MCF 10A (cell line): ENCODE measurements at regions of chr2 and their contacts with region 1.

Region 1: DNA sequence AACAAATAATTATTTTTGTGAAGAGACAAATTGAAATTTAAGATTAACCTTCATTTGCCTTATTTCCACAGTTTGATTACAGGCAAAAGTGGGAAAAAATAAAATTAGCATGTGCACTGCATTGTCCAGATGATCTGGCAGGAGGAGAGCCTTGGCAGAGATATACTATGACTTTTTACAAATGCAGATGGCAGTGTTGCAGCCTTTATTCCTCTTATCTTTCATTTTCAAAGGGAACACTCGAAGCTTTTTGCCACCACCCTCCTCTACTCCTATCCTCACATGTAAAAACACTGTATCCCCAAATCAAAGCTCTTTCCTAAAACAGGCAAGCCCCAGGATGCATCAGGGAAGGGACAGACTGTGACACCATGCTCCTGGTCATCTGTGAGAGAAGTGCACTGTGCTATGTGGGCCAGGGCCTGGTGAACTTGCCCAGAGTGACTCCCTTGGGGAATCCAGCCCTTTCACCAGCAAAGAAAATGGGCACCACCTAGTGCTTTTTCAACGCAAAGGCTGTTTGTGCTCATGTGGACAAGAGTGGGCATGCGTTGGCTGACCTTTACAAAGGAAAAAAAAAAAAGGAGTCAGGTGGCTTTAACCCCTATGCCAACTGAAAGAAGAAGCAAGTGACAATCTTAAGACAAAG is 74.7 kb upstream of the ETAA1 start:
- DNase-seq: peak; percentile 76
- H3K4me3 Mint-ChIP-seq: no peak overlapping the region
- H3K27ac Mint-ChIP-seq: peak overlapping the region; percentile 57
- H3K4me1 Mint-ChIP-seq: peaks cover 6% of the 10 kb centered on the region
- H3K27me3 Mint-ChIP-seq: no peaks in the 10 kb centered on the region
- CTCF ChIP-seq: peak; percentile 44

Region 2: DNA sequence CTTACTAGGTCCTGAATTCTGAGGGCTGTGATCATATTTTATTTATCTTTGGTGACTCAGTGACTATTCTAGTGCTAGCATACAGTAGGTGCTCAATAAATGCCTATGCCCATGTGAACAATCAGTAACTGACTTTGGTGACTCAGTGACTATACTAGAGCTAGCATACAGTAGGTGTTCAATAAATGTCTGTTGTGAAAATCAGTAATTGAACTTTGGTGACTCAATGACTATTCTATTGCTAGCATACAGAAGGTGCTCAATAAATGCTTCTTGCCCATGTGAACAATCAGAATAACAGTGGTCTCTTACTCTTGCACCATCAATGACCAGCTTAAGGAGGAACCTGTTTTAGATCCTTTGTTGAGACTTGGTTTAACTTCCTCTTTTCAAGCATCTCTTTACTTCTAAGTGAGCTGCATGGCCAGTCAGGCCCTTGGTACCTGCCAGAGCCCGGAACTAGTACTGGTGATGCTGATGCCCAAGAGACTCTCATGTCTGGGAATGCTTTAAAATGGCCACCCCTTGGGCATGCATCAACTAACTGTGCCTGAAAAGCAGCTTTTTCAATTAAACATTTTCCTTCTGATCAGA is 1675.1 kb before region 1 on chr2:
- CTCF ChIA-PET with region 1: no interaction called
- POLR2A ChIA-PET with region 1: no interaction called
- intact Hi-C with region 1: loop called (anchors 10 kb)
- DNase-seq: no peak
- H3K4me3 Mint-ChIP-seq: no peak overlapping the region
- H3K27ac Mint-ChIP-seq: no peak overlapping the region
- H3K4me1 Mint-ChIP-seq: no peaks in the 10 kb centered on the region
- H3K27me3 Mint-ChIP-seq: no peaks in the 10 kb centered on the region
- CTCF ChIP-seq: no peak

Region 3: GRCh38 chr2:67215214-67216055 is 107.0 kb before region 1 on chr2:
- CTCF ChIA-PET with region 1: no interaction called
- POLR2A ChIA-PET with region 1: no interaction called
- intact Hi-C with region 1: loop called (anchors 1 kb)
- DNase-seq: peak; percentile 76
- H3K4me3 Mint-ChIP-seq: peak overlapping the region; percentile 21
- H3K27ac Mint-ChIP-seq: peak overlapping the region; percentile 32
- H3K4me1 Mint-ChIP-seq: peaks cover 6% of the 10 kb centered on the region
- H3K27me3 Mint-ChIP-seq: no peaks in the 10 kb centered on the region
- CTCF ChIP-seq: peak; percentile 77

Region 4: GRCh38 chr2:67234439-67234838 is 88.0 kb before region 1 on chr2:
- CTCF ChIA-PET with region 1: interaction called, 4 read pairs
- POLR2A ChIA-PET with region 1: no interaction called
- intact Hi-C with region 1: loop called (anchors 1 kb)
- DNase-seq: peak; percentile 16
- H3K4me3 Mint-ChIP-seq: no peak overlapping the region
- H3K27ac Mint-ChIP-seq: no peak overlapping the region
- H3K4me1 Mint-ChIP-seq: no peaks in the 10 kb centered on the region
- H3K27me3 Mint-ChIP-seq: no peaks in the 10 kb centered on the region
- CTCF ChIP-seq: peak; percentile 38

Region 5: DNA sequence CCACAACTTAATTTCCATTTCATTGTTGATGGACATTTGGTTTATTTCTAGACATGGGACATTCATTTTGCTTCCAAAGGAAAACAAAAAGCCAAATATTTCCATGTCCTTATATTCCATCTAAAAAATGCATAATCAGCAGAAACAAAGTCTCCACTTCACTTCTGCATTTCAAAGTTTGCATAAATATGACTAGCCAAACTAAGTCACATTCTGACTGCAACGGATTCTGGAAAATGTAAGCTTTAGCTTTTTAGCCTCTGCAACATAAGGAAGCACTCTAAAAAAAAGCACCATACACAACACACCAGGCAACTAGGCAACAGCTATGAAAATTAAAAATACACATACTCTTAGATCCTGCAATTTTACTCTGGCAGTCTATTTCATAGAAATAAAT is 209.9 kb after region 1 on chr2:
- CTCF ChIA-PET with region 1: no interaction called
- POLR2A ChIA-PET with region 1: no interaction called
- intact Hi-C with region 1: no loop called
- DNase-seq: no peak
- H3K4me3 Mint-ChIP-seq: no peak overlapping the region
- H3K27ac Mint-ChIP-seq: no peak overlapping the region
- H3K4me1 Mint-ChIP-seq: no peaks in the 10 kb centered on the region
- H3K27me3 Mint-ChIP-seq: no peaks in the 10 kb centered on the region
- CTCF ChIP-seq: no peak